Ovary (tissue), 10 donors: ENCODE measurements at regions of chr11 and their contacts with region 1.

Region 1: DNA sequence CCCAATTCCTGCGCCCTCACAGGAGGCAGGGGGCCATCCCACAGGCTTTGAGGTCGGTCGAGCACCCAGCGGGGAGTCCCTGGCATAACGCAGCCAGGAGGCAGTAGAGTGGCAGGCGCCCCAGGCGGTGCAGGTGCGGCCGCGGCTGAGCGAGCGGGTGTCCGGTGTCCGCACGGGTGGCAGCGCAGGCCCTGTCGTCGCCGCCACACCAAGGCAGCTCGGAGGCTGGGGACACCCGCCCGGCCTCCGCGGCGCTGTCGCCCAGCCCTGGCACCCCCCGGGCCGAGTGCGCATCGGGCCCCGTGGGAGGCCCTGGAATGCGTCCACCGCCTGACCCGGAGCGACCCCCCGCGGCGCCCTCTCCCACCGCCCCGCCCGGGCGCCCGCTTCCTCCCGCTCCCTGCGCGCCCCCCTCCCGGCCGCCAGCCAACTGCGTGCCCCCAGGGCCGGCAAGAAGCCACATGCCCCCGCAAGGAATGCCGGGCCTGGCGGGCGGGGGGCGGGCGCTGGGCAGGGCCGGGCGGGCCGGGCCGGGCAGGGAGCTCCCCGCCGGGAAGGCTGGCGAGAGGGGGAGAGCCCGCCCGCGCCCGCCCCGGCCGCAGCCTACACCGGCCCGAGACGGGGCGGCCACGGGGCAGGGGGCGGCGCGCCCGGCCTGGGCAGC is 33.9 kb downstream of the PRDM11 start:
- DNase-seq: peak; percentile 53 to 74 (median 71)
- H3K4me3 ChIP-seq: peak overlapping the region; percentile 65
- H3K27ac ChIP-seq: peak overlapping the region; percentile 82 to 91
- H3K4me1 ChIP-seq: peaks cover 17% of the 10 kb centered on the region
- H3K27me3 ChIP-seq: no peaks in the 10 kb centered on the region
- CTCF ChIP-seq: peak in 2 of 3 donors; percentile 21 to 29
- EP300 ChIP-seq: no peak
- POLR2A ChIP-seq: no peak

Region 2: DNA sequence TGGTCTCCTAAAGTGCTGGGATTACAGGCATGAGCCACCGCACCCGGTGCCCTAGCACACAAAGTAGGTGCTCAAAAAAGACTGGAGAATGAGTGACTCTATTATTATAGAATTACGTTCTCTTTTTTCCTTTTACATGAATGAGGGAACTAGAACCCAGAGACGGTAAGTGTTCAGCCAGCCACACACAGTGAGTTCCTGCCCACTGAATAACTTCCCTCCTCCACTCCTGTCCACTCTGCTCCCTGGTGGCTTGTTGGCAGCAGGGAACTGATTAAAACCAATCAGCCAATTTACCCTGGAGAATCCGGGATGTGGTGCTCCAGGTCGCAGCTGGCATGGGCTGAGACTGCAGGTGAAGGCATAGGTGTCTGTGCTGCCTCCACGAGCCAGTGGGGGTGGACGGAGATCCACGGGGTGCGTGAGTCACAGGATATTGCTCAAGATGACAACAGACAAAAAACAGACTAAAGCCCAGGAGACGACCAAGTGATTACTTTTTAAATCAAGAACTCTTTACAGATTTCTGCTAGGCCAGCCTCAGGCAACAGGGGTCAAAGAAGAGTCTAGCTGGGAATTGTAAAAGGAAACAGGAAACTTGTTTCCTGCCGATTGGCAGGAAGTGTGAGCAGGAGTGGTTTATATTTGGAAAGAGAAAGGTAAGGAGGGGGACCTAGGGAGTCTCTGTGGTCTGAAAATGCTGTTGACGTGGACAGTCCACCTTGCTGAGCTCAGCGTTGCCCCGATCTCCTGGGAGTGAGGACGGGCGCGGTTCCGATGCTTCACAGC is 134.4 kb before region 1 on chr11:
- intact Hi-C with region 1: no loop called
- DNase-seq: peak in 1 of 5 donors; percentile 29
- H3K4me3 ChIP-seq: no peak overlapping the region
- H3K27ac ChIP-seq: no peak overlapping the region
- H3K4me1 ChIP-seq: no peaks in the 10 kb centered on the region
- H3K27me3 ChIP-seq: no peaks in the 10 kb centered on the region
- CTCF ChIP-seq: no peak
- EP300 ChIP-seq: no peak
- POLR2A ChIP-seq: no peak

Region 3: DNA sequence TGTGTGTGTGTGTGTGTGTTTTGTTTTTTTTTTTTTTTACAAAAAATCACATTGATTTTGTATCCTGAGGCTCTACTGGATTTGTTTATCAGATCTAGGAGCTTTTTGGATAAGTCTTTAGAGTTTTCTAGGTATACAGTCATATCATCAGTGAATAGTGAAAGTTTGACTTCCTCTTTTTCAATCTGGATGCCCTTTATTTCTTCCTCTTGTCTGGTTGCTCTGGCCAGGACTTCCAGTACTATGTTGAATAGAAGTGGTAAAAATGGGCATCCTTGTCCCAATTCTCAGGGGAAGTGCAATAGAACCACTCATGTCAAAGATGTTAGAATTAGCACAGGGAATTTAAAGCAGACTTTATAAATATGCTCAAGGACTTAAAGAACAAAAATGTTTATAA is 66.5 kb before region 1 on chr11:
- intact Hi-C with region 1: no loop called
- DNase-seq: no peak
- H3K4me3 ChIP-seq: no peak overlapping the region
- H3K27ac ChIP-seq: no peak overlapping the region
- H3K4me1 ChIP-seq: no peaks in the 10 kb centered on the region
- H3K27me3 ChIP-seq: no peaks in the 10 kb centered on the region
- CTCF ChIP-seq: no peak
- EP300 ChIP-seq: no peak
- POLR2A ChIP-seq: no peak

Region 4: DNA sequence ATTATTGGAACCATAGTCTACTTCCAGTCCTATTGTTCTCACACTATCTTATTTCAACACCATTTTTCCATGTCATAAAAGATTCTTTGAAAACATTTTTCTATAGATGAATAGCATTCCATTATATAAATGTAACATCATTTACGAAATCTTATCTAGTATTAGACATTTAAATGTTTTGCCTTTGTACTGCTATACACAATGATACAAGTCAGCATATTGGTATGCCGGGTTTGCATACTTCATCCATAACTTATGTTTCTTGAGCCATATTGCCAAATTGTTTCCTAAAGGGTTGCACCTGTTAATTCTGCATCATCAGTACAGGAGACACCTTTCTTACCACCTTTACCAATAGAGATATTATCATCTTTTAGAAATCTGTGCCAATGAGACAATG is 37.7 kb after region 1 on chr11:
- intact Hi-C with region 1: loop called in 1 of 4 experiments (anchors 5 kb)
- DNase-seq: no peak
- H3K4me3 ChIP-seq: no peak overlapping the region
- H3K27ac ChIP-seq: no peak overlapping the region
- H3K4me1 ChIP-seq: no peaks in the 10 kb centered on the region
- H3K27me3 ChIP-seq: no peaks in the 10 kb centered on the region
- CTCF ChIP-seq: no peak
- EP300 ChIP-seq: no peak
- POLR2A ChIP-seq: no peak